Stomach (tissue), 19 donors: ENCODE measurements at regions of chr1 and their contacts with region 1.

Region 1: GRCh38 chr1:232630047-232630893 is at the start of gene SIPA1L2:
- DNase-seq: peak; percentile 95 to 98
- H3K4me3 ChIP-seq: peak within 1 kb of the TSS; percentile 72 to 93 (median 82)
- H3K27ac ChIP-seq: peak within 1 kb of the TSS; percentile 84 to 95 (median 86)
- H3K4me1 ChIP-seq: peaks cover 5 to 55% (median 32%) of the 10 kb centered on the region in 4 donors
- H3K27me3 ChIP-seq: peaks cover 0 to 9% (median 3%) of the 10 kb centered on the region in 3 donors
- CTCF ChIP-seq: peak in 5 of 7 experiments; percentile 30 to 58 (median 47)
- EP300 ChIP-seq: no peak
- POLR2A ChIP-seq: no peak
- total RNA-seq, gene SIPA1L2: 6.4 to 240 (median 37.5) TPM

Region 2: DNA sequence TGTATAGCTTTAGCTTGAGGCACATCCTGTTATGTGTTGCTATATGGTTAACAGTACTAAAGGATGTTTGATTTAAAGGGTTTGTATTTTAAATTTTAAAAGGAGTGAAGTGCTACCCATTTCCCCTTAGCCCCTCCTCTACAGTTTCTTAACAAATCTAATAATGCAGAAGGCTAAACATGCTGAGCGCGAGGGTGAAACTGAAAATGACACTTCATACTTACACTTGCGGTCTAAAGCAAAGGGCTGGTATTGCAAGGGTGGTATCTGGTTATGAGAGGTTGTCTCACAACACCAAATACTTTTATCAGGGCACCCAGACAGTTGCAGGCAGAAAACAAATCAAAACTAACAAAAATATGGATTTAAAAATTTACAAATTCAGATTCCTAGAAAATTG is 172.7 kb before region 1 on chr1:
- intact Hi-C with region 1: no loop called
- DNase-seq: peak in 1 of 2 donors; percentile 31
- H3K4me3 ChIP-seq: no peak overlapping the region
- H3K27ac ChIP-seq: no peak overlapping the region
- H3K4me1 ChIP-seq: no peaks in the 10 kb centered on the region
- H3K27me3 ChIP-seq: no peaks in the 10 kb centered on the region
- CTCF ChIP-seq: no peak
- EP300 ChIP-seq: no peak
- POLR2A ChIP-seq: no peak

Region 3: DNA sequence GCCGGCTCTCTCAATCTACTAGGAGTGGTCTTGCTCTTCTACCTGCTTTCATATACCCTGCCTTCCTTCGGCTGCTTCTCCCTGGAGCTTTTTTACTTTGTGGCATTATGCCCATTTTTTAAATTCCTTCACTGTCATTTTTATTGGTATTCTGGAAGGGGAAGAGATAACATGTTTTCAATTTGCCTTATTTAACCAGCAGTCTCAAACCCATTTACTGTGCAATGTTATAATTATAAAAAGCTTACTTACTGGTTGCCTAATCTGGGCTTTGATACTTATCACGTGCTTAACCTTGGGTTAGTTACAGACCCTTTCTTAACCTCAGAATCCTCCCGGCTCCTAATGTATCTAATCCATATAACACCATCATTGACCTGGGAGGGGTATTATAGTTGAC is 128.4 kb before region 1 on chr1:
- intact Hi-C with region 1: no loop called
- DNase-seq: no peak
- H3K4me3 ChIP-seq: no peak overlapping the region
- H3K27ac ChIP-seq: no peak overlapping the region
- H3K4me1 ChIP-seq: peaks cover 0 to 8% (median 0%) of the 10 kb centered on the region in 4 donors
- H3K27me3 ChIP-seq: no peaks in the 10 kb centered on the region
- CTCF ChIP-seq: no peak
- EP300 ChIP-seq: no peak
- POLR2A ChIP-seq: no peak

Region 4: DNA sequence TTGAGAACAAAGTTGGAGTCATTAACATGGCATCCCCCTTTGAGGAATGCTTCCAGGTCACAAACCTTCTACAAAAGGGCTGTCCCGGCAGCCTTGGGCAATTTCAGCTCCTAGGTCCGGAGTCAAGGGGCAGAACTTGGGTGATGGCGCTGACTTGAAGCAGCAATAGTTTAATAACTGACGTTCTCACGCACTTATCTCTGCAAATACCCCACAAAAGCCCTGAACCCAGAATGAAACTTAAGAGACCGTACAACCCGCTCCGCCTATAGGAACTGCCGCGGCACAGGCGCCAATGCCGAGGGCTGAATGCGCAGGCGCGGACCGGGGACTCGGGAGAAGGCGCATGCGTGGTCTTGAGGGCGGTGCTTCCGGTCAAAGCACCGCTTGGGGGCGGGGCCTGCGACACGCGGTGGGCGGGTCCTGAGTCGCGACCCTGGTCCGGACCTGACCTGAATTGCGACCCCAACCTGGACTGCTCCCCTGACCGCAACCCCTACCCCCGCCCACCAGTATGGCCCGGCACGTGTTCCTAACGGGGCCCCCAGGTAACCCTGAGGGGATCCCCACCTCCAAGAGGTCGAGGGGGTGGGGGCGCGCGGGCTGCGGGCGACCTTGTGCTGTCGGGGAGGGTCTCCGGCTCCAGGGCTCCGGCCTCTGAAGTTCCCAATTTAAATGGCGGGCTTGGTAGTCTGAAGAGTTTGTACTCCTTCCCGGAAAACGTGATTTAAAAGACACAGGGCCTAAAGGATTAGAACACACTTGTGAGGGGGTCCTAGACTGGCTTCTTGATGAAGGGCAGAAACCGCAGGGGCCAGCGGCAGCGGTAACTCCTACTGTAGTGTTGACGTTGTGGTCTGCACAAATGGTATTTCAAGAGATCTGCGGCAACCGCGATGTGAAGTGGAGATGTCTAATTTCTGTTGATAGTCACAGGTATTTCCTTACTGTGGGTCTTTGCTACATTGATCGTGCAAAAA is 320.2 kb after region 1 on chr1 and contains the start of gene NTPCR:
- intact Hi-C with region 1: loop called (anchors 10 kb)
- DNase-seq: peak; percentile 96 to 98
- H3K4me3 ChIP-seq: peak within 1 kb of the TSS; percentile 71 to 90 (median 81)
- H3K27ac ChIP-seq: peak within 1 kb of the TSS; percentile 84 to 89 (median 86)
- H3K4me1 ChIP-seq: peaks cover 15 to 29% (median 24%) of the 10 kb centered on the region in 4 donors
- H3K27me3 ChIP-seq: no peaks in the 10 kb centered on the region
- CTCF ChIP-seq: peak in 3 of 7 experiments; percentile 8 to 15 (median 11)
- EP300 ChIP-seq: no peak
- POLR2A ChIP-seq: no peak
- total RNA-seq, gene NTPCR: 14.9 to 46.3 (median 24.6) TPM

Region 5: DNA sequence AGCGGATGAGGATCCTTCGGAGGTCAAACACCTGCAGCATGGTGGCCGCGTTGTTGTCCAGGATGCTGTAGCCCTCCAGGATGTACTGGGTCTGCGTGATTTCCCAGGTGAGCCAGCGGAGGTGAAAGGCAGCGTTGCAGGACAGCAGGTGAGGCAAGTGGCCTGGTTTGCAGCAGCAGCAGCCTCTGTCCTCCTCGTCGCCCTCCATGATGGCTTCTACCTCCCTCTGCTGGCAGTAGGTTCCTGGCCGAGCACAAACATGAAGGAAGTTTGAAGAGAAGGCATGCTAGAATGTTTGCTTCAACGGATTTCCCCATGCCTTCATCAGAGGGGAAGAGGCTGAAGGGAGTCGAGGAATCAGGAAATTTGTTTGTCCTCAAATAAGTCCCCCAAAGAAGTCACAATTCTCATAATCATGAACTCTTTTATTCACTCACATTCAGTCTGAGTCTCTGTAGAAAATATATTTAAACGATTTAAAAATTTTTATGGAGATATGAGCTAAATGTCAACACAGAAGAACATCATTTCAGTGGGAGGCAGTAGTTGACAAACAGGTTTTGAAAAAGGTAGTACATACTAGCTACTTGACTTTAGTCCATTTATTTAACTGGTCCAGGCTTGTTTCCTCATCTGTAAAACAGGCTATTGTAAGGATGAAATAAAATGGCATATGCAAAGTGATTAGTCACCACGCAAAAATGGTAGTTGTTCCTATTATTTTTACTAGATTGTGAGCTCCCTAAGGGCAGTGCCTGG is 395.1 kb after region 1 on chr1:
- intact Hi-C with region 1: loop called (anchors 10 kb)
- DNase-seq: peak; percentile 63 to 80
- H3K4me3 ChIP-seq: no peak overlapping the region
- H3K27ac ChIP-seq: no peak overlapping the region
- H3K4me1 ChIP-seq: peaks cover 0 to 9% (median 6%) of the 10 kb centered on the region in 4 donors
- H3K27me3 ChIP-seq: no peaks in the 10 kb centered on the region
- CTCF ChIP-seq: peak in 5 of 7 experiments; percentile 30 to 56 (median 45)
- EP300 ChIP-seq: no peak
- POLR2A ChIP-seq: no peak

Region 6: GRCh38 chr1:233238884-233239431 is 608.7 kb after region 1 on chr1:
- intact Hi-C with region 1: loop called (anchors 10 kb)
- DNase-seq: peak in 1 of 2 donors; percentile 57
- H3K4me3 ChIP-seq: no peak overlapping the region
- H3K27ac ChIP-seq: no peak overlapping the region
- H3K4me1 ChIP-seq: peaks cover 15 to 36% (median 25%) of the 10 kb centered on the region in 4 donors
- H3K27me3 ChIP-seq: no peaks in the 10 kb centered on the region
- CTCF ChIP-seq: no peak
- EP300 ChIP-seq: no peak
- POLR2A ChIP-seq: no peak